Vagina (tissue), 2 donors: ENCODE measurements at regions of chr3 and their contacts with region 1.

Region 1: DNA sequence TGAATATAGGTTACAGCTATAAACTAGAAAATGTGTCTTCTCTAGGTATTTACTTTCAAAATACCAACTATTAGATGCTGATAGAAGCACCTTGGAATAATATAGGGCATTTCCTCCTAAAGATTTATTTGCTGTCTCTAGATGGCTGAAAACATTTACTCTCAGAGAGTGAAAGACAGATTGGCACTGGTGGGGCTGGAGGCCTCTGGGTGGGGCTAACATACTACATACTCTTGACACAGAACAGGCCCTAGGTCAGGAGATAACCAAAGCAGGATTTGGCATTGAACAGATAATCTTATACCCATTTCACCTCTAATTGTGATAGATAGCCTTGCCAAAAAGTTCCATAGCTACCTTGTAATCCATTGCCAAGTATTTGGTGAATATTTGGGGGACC is 253.3 kb upstream of the TBC1D5 start:
- DNase-seq: no peak
- H3K4me3 ChIP-seq: no peak overlapping the region
- H3K27ac ChIP-seq: no peak overlapping the region
- H3K4me1 ChIP-seq: no peaks in the 10 kb centered on the region
- H3K27me3 ChIP-seq: no peaks in the 10 kb centered on the region
- CTCF ChIP-seq: no peak
- POLR2A ChIP-seq: no peak

Region 2: DNA sequence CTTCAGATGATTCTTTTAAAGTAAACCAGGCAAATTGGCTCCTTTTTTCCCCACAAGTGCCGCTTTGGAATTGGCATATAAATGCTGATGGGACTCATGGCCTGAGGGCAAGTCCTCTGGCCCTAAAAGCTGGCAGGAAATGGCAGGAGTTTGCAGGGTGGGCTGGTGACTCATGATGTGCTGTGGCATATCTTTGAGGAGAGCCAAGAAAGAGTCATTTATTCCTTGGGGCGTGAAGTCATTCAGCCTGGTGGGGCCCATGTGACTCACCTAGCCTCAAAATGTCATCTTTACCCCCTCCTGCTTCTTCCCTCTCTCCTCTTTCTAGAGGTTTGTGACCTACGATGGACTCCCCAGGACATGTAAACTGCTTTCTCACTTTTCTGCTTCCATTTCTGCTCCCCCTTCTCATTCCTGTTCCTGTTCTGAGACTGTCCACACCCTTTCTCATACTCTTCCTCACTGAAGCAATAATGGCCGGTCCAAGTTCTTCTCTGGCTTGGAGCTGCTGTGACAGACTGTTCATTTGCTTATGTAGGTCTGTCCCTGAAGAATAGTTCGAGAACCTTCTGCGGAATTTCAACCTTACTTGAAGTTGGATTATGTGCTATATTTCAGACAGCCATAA is 103.3 kb after region 1 on chr3:
- intact Hi-C with region 1: loop called (anchors 5 kb)
- DNase-seq: no peak
- H3K4me3 ChIP-seq: no peak overlapping the region
- H3K27ac ChIP-seq: no peak overlapping the region
- H3K4me1 ChIP-seq: no peaks in the 10 kb centered on the region
- H3K27me3 ChIP-seq: no peaks in the 10 kb centered on the region
- CTCF ChIP-seq: no peak
- POLR2A ChIP-seq: no peak